Heart left ventricle (tissue), 16 donors: ENCODE measurements at regions of chr1 and their contacts with region 1.

Region 1: GRCh38 chr1:117036018-117036461 is 24.1 kb upstream of the TTF2 start:
- DNase-seq: no peak
- ATAC-seq: no peak
- H3K4me3 ChIP-seq: no peak overlapping the region
- H3K27ac ChIP-seq: no peak overlapping the region
- H3K4me1 ChIP-seq: peaks cover 0 to 5% (median 0%) of the 10 kb centered on the region in 12 donors
- H3K27me3 ChIP-seq: no peaks in the 10 kb centered on the region
- CTCF ChIP-seq: no peak
- POLR2A ChIP-seq: no peak

Region 2: GRCh38 chr1:116868385-116868784 is 167.7 kb before region 1 on chr1:
- intact Hi-C with region 1: loop called in 1 of 10 experiments (anchors 10 kb)
- DNase-seq: no peak
- ATAC-seq: no peak
- H3K4me3 ChIP-seq: no peak overlapping the region
- H3K27ac ChIP-seq: no peak overlapping the region
- H3K4me1 ChIP-seq: no peaks in the 10 kb centered on the region
- H3K27me3 ChIP-seq: no peaks in the 10 kb centered on the region
- CTCF ChIP-seq: no peak
- POLR2A ChIP-seq: no peak